Sciatic nerve (tissue), 2 donors: ENCODE measurements at regions of chr1 and their contacts with region 1.

Region 1: GRCh38 chr1:185488808-185489207 is 171.8 kb upstream of the IVNS1ABP start:
- DNase-seq: no peak
- ATAC-seq: peak; percentile 48

Region 2: GRCh38 chr1:185515696-185516095 is 26.9 kb after region 1 on chr1:
- intact Hi-C with region 1: loop called (anchors 1 kb)
- DNase-seq: no peak
- ATAC-seq: no peak